ENCODE measurements at regions of chr1 and their contacts with region 1.

Region 1: GRCh38 chr1:156445789-156446263 is 54.7 kb downstream of the MEF2D start:
- H3K4me3 ChIP-seq: no peak overlapping the region
- H3K27ac ChIP-seq: no peak overlapping the region
- H3K4me1 ChIP-seq: no peaks in the 10 kb centered on the region
- CTCF ChIP-seq: peak; percentile 88

Region 2: DNA sequence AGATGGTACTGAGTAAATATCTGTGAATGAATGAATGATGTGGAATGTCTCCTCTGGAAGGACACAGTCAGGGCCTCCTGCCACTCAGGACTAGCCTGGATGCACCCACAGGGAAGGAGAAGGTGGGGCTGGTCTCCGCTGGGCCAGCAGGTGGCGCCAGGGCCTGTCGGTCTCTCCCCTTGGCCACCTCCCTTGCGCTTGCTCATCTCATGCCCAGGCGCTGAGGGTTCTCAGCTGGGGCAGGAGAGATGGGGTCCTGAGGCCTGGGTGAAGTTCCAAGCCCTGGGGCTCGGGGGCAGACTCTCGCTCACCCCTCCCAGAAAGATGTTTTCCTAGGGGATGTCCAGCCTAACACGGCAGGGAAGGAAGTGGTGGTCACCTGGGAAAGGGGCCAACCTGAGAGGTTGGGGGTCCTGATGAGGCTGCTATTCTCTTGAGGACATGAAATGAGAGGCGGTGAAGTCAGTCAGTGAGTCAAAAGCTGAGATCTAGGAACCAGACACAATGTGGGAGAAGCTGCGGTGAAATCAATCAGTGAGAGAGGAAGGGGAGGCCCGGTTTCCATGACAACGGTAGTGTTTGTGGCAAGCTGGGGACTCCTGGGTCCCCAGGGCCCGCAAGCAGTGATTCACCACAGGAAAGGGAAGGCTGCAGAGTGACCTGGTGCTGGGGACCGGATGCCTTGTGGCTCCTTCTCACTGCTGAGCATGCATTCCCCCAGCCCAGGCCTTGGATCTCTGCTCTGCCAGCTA is 349.0 kb before region 1 on chr1:
- CTCF ChIA-PET with region 1: no interaction called
- POLR2A ChIA-PET with region 1: no interaction called
- H3K4me3 ChIP-seq: no peak overlapping the region
- H3K27ac ChIP-seq: no peak overlapping the region
- H3K4me1 ChIP-seq: no peaks in the 10 kb centered on the region
- CTCF ChIP-seq: peak; percentile 93

Region 3: GRCh38 chr1:156368889-156369684 is 76.7 kb before region 1 on chr1 and contains the start of gene RHBG:
- CTCF ChIA-PET with region 1: interaction called, 17 read pairs
- POLR2A ChIA-PET with region 1: no interaction called
- H3K4me3 ChIP-seq: peak within 1 kb of the TSS; percentile 15
- H3K27ac ChIP-seq: no peak within 1 kb of the TSS
- H3K4me1 ChIP-seq: no peaks in the 10 kb centered on the region
- CTCF ChIP-seq: no peak

Region 4: GRCh38 chr1:156421062-156421938 is 24.5 kb before region 1 on chr1:
- CTCF ChIA-PET with region 1: interaction called, 14 read pairs
- POLR2A ChIA-PET with region 1: no interaction called
- H3K4me3 ChIP-seq: peak overlapping the region; percentile 17
- H3K27ac ChIP-seq: no peak overlapping the region
- H3K4me1 ChIP-seq: peaks cover 2% of the 10 kb centered on the region; the same call in 1 of the 2 replicates
- CTCF ChIP-seq: no peak

Region 5: GRCh38 chr1:156435545-156436141 is 10.2 kb before region 1 on chr1:
- CTCF ChIA-PET with region 1: interaction called, 20 read pairs
- POLR2A ChIA-PET with region 1: no interaction called
- H3K4me3 ChIP-seq: no peak overlapping the region
- H3K27ac ChIP-seq: no peak overlapping the region
- H3K4me1 ChIP-seq: peaks cover 3% of the 10 kb centered on the region; the same call in 1 of the 2 replicates
- CTCF ChIP-seq: no peak

Region 6: GRCh38 chr1:156608036-156608674 is 162.3 kb after region 1 on chr1:
- CTCF ChIA-PET with region 1: interaction called, 11 read pairs
- POLR2A ChIA-PET with region 1: no interaction called
- H3K4me3 ChIP-seq: no peak overlapping the region
- H3K27ac ChIP-seq: no peak overlapping the region
- H3K4me1 ChIP-seq: no peaks in the 10 kb centered on the region
- CTCF ChIP-seq: peak; percentile 85

Measured in HEK293 (cell line).